Left lung (tissue), 14 donors: ENCODE measurements at regions of chr3 and their contacts with region 1.

Region 1: DNA sequence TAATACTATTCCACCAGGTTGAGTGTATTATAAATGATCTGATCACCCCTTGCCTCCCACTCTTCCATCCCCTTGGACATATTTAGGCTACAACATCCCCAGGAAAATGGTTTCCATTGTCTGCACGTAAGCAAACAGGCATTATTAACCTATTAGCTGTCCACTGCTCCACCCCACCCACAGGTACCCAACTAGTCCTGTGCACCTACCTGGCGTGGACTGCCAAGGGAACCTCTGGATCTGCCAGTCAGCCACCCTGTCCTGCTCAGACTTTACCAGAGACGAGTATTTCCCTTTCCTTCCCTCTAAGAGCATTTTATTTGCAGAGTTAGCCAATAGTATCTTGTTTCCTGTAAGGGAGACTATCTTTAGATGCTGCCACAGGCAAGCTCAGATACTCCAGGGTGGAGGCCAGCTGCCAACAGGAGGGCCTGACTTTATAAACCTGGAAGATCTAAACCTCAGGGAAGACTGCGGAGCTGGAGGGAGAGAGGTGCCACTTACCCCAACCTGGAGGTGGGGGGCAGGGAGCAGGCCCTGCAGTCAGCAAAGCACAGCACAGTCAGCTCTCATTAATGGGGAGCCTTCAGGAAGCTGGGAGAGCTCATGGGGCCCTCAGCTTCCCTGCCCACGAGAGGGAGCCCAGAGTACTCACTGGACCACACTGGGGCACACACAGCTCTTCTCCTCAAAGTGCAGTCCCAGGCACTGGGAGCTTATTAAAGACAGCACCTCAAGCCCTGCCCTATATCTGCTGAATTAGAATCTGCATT is at the start of gene CX3CR1:
- DNase-seq: no peak
- ATAC-seq: peak; percentile 60
- H3K4me3 ChIP-seq: no peak within 1 kb of the TSS
- H3K27ac ChIP-seq: no peak within 1 kb of the TSS
- H3K4me1 ChIP-seq: peaks cover 0 to 45% of the 10 kb centered on the region in 2 donors
- H3K27me3 ChIP-seq: no peaks in the 10 kb centered on the region
- CTCF ChIP-seq: no peak
- polyA plus RNA-seq, gene CX3CR1: 1.8 to 5.7 (median 4.4) TPM

Region 2: GRCh38 chr3:39208463-39209055 is 71.4 kb before region 1 on chr3:
- intact Hi-C with region 1: loop called in 1 of 2 experiments (anchors 5 kb)
- DNase-seq: peak in 2 of 4 donors; percentile 34 to 61
- ATAC-seq: peak; percentile 86
- H3K4me3 ChIP-seq: no peak overlapping the region
- H3K27ac ChIP-seq: peak overlapping the region in 1 of 2 donors; percentile 16
- H3K4me1 ChIP-seq: peaks cover 0 to 15% of the 10 kb centered on the region in 2 donors
- H3K27me3 ChIP-seq: no peaks in the 10 kb centered on the region
- CTCF ChIP-seq: peak; percentile 46 to 51